IMR-90 (cell line): ENCODE measurements at regions of chr9 and their contacts with region 1.

Region 1: GRCh38 chr9:81848472-81848871 is 79.8 kb upstream of the SPATA31D4 start:
- DNase-seq: peak; percentile 66
- ATAC-seq: peak; percentile 75
- H3K4me3 ChIP-seq: no peak overlapping the region
- H3K27ac ChIP-seq: no peak overlapping the region
- H3K4me1 ChIP-seq: no peaks in the 10 kb centered on the region; the same call in 1 of the 2 replicates
- H3K27me3 ChIP-seq: no peaks in the 10 kb centered on the region
- CTCF ChIP-seq: peak; percentile 63
- POLR2A ChIP-seq: no peak
- RAD21 ChIP-seq: peak; percentile 60

Region 2: GRCh38 chr9:81182431-81182830 is 666.0 kb before region 1 on chr9:
- CTCF ChIA-PET with region 1: no interaction called
- POLR2A ChIA-PET with region 1: no interaction called
- dilution Hi-C with region 1: no loop called
- in situ Hi-C with region 1: loop called (anchors 10 kb)
- intact Hi-C with region 1: no loop called
- DNase-seq: peak; percentile 77
- ATAC-seq: peak; percentile 87
- H3K4me3 ChIP-seq: no peak overlapping the region
- H3K27ac ChIP-seq: no peak overlapping the region
- H3K4me1 ChIP-seq: peaks cover 3% of the 10 kb centered on the region
- H3K27me3 ChIP-seq: peaks cover 2% of the 10 kb centered on the region; the same call in 1 of the 2 replicates
- CTCF ChIP-seq: no peak
- POLR2A ChIP-seq: no peak
- RAD21 ChIP-seq: no peak

Region 3: GRCh38 chr9:81344366-81344765 is 504.1 kb before region 1 on chr9:
- CTCF ChIA-PET with region 1: no interaction called
- POLR2A ChIA-PET with region 1: no interaction called
- dilution Hi-C with region 1: no loop called
- in situ Hi-C with region 1: no loop called
- intact Hi-C with region 1: no loop called
- DNase-seq: no peak
- ATAC-seq: no peak
- H3K4me3 ChIP-seq: no peak overlapping the region
- H3K27ac ChIP-seq: no peak overlapping the region
- H3K4me1 ChIP-seq: no peaks in the 10 kb centered on the region
- H3K27me3 ChIP-seq: no peaks in the 10 kb centered on the region
- CTCF ChIP-seq: no peak
- POLR2A ChIP-seq: no peak
- RAD21 ChIP-seq: no peak

Region 4: DNA sequence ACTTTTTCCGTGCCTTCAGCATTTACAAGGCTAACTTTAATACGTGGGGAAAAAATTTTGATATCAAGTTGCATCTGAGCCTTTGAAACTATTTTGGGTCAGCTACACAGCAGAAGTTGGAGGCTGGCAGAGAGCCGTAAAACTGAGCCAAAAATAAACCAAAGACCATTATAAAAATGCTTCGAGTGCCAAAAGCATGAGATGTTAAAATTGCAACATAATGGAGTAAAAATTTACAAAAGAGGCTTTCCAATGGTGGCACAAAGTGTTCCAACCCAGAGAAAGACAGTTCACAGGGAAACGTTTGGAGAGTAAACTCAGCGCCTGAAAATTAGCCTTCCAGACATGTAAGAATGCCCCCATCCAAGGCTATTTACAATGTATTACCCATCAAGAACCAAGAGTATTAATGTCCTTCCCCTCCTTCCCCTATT is 349.4 kb before region 1 on chr9:
- CTCF ChIA-PET with region 1: no interaction called
- POLR2A ChIA-PET with region 1: no interaction called
- dilution Hi-C with region 1: no loop called
- in situ Hi-C with region 1: no loop called
- intact Hi-C with region 1: loop called (anchors 2 kb)
- DNase-seq: peak; percentile 85
- ATAC-seq: peak; percentile 84
- H3K4me3 ChIP-seq: no peak overlapping the region
- H3K27ac ChIP-seq: no peak overlapping the region
- H3K4me1 ChIP-seq: peaks cover 9% of the 10 kb centered on the region; the same call in 1 of the 2 replicates
- H3K27me3 ChIP-seq: no peaks in the 10 kb centered on the region; the same call in none of the 2 replicates
- CTCF ChIP-seq: no peak
- POLR2A ChIP-seq: no peak
- RAD21 ChIP-seq: peak; percentile 11; the same call in 1 of the 2 replicates

Region 5: GRCh38 chr9:81601639-81602628 is 246.5 kb before region 1 on chr9:
- CTCF ChIA-PET with region 1: no interaction called
- POLR2A ChIA-PET with region 1: no interaction called
- dilution Hi-C with region 1: no loop called
- in situ Hi-C with region 1: no loop called
- intact Hi-C with region 1: no loop called
- DNase-seq: peak; percentile 72
- ATAC-seq: peak; percentile 84
- H3K4me3 ChIP-seq: no peak overlapping the region
- H3K27ac ChIP-seq: peak overlapping the region; percentile 31; the same call in 1 of the 2 replicates
- H3K4me1 ChIP-seq: peaks cover 10% of the 10 kb centered on the region
- H3K27me3 ChIP-seq: no peaks in the 10 kb centered on the region
- CTCF ChIP-seq: no peak
- POLR2A ChIP-seq: no peak
- RAD21 ChIP-seq: no peak

Region 6: GRCh38 chr9:81705578-81705977 is 142.9 kb before region 1 on chr9:
- CTCF ChIA-PET with region 1: interaction called, 8 read pairs
- POLR2A ChIA-PET with region 1: no interaction called
- dilution Hi-C with region 1: no loop called
- in situ Hi-C with region 1: loop called (anchors 10 kb)
- intact Hi-C with region 1: no loop called
- DNase-seq: no peak
- ATAC-seq: no peak
- H3K4me3 ChIP-seq: no peak overlapping the region
- H3K27ac ChIP-seq: no peak overlapping the region
- H3K4me1 ChIP-seq: no peaks in the 10 kb centered on the region
- H3K27me3 ChIP-seq: no peaks in the 10 kb centered on the region
- CTCF ChIP-seq: no peak
- POLR2A ChIP-seq: no peak
- RAD21 ChIP-seq: no peak

Region 7: DNA sequence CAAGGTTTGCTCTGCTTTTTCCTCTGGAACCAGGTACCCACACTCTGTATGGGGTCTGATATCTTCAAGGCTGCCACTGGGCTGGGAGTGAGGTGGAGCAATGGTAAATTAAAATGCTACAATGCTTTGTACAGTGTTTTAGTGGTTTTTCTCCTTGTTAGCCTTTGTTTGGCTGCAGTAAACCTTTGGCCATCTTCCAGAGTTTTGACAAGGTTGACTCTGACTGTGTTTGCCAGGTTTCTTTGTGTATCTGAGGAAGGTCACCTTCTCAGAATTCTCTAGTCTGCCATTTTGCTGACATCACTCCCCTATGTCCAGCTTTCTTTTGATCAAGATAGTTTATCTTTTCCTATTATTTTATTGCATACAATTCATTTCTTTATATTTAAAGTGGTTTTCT is 151.3 kb after region 1 on chr9:
- CTCF ChIA-PET with region 1: no interaction called
- POLR2A ChIA-PET with region 1: no interaction called
- dilution Hi-C with region 1: no loop called
- in situ Hi-C with region 1: no loop called
- intact Hi-C with region 1: no loop called
- DNase-seq: no peak
- ATAC-seq: no peak
- H3K4me3 ChIP-seq: no peak overlapping the region
- H3K27ac ChIP-seq: no peak overlapping the region
- H3K4me1 ChIP-seq: no peaks in the 10 kb centered on the region
- H3K27me3 ChIP-seq: peaks cover 5% of the 10 kb centered on the region
- CTCF ChIP-seq: no peak
- POLR2A ChIP-seq: no peak
- RAD21 ChIP-seq: no peak